Caco-2 (cell line): ENCODE measurements at regions of chr15 and their contacts with region 1.

Region 1: DNA sequence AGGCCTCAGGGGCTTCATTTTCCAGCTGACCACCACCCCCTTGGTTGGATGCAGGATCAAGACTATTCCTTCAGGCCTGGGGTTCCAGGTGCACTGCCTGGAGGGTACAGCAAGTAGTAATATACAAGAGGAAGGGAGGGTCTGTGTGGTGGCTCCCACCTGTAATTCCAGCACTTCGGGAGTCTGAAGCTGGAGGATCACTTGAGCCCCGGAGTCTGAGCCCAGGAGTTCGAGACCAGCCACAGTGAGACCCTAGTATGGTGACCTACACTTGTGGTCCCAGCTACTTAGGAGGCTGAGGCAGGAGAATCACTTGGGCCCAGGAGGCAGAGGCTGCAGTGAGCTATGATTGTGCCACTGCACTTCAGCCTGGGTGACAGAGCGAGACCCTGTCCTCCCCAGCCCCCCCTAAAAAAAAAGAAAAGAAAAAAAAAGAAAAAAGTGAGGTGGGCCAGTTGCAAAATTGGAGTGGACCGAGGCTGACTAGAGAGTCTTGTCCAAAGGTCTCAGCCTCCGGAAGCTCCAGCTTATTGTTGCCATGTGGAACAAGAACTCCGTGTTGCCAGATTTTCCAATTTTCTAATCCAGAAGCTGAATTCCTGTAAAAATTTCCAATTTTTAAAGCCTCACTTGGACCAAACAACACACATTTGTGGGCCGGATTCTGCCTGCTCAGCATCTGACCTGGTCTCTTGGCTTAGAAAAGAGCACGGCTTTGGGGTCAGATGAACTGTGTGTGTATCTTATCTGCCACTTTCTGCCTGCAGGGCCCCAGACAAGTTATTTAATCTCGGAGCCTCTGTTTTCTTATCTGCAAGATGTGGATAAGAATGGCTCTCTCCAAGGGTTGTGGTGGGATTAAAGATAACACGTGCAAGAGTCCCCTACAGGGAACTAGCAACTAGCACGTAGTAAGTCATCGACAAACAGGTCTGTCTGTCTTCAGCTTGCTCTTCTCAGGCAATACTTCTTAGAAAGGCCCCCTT is 73.5 kb upstream of the TLE3 start:
- DNase-seq: peak; percentile 62 to 68
- H3K4me3 ChIP-seq: no peak overlapping the region
- H3K4me3 Mint-ChIP-seq: no peak overlapping the region
- H3K27ac Mint-ChIP-seq: no peak overlapping the region
- H3K4me1 ChIP-seq: peaks cover 28% of the 10 kb centered on the region
- H3K4me1 Mint-ChIP-seq: peaks cover 28% of the 10 kb centered on the region
- H3K27me3 ChIP-seq: no peaks in the 10 kb centered on the region
- H3K27me3 Mint-ChIP-seq: peaks cover 3% of the 10 kb centered on the region
- CTCF ChIP-seq: no peak

Region 2: GRCh38 chr15:69958494-69959084 is 212.6 kb before region 1 on chr15:
- CTCF ChIA-PET with region 1: no interaction called
- POLR2A ChIA-PET with region 1: no interaction called
- intact Hi-C with region 1: no loop called
- DNase-seq: no peak
- H3K4me3 ChIP-seq: no peak overlapping the region
- H3K4me3 Mint-ChIP-seq: no peak overlapping the region
- H3K27ac Mint-ChIP-seq: no peak overlapping the region
- H3K4me1 ChIP-seq: no peaks in the 10 kb centered on the region
- H3K4me1 Mint-ChIP-seq: no peaks in the 10 kb centered on the region
- H3K27me3 ChIP-seq: no peaks in the 10 kb centered on the region; the same call in none of the 2 replicates
- H3K27me3 Mint-ChIP-seq: peaks cover 3% of the 10 kb centered on the region
- CTCF ChIP-seq: no peak

Region 3: DNA sequence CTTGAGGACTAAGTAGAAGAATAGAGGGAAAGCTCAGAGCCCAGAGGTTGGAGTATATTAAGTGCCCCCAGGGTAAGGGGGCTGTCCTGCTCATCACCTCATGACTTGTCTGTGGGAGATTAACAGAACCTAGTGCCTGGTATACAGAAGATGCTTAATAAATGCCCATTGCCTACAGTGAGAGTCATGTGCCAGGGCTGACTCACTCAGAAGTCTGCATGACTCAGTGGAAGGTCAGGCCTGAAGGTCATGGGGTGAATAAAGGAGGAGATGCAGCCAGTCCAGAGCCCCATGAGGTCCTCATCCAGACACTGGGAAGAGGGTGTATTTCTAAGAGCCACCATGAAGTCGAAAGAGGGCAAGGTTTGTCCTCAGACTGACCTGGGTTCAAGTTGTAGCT is 10.9 kb before region 1 on chr15:
- CTCF ChIA-PET with region 1: interaction called, 4 read pairs
- POLR2A ChIA-PET with region 1: no interaction called
- intact Hi-C with region 1: loop called (anchors 1 kb)
- DNase-seq: peak in 1 of 2 experiments; percentile 23
- H3K4me3 ChIP-seq: no peak overlapping the region
- H3K4me3 Mint-ChIP-seq: no peak overlapping the region
- H3K27ac Mint-ChIP-seq: no peak overlapping the region
- H3K4me1 ChIP-seq: peaks cover 17% of the 10 kb centered on the region
- H3K4me1 Mint-ChIP-seq: peaks cover 34% of the 10 kb centered on the region
- H3K27me3 ChIP-seq: no peaks in the 10 kb centered on the region
- H3K27me3 Mint-ChIP-seq: no peaks in the 10 kb centered on the region
- CTCF ChIP-seq: no peak

Region 4: GRCh38 chr15:70488002-70488605 is 316.9 kb after region 1 on chr15:
- CTCF ChIA-PET with region 1: no interaction called
- POLR2A ChIA-PET with region 1: no interaction called
- intact Hi-C with region 1: no loop called
- DNase-seq: peak; percentile 58 to 75
- H3K4me3 ChIP-seq: no peak overlapping the region
- H3K4me3 Mint-ChIP-seq: no peak overlapping the region
- H3K27ac Mint-ChIP-seq: no peak overlapping the region
- H3K4me1 ChIP-seq: peaks cover 8% of the 10 kb centered on the region
- H3K4me1 Mint-ChIP-seq: peaks cover 15% of the 10 kb centered on the region
- H3K27me3 ChIP-seq: no peaks in the 10 kb centered on the region
- H3K27me3 Mint-ChIP-seq: no peaks in the 10 kb centered on the region
- CTCF ChIP-seq: peak; percentile 85